ENCODE measurements at regions of chr12 and their contacts with region 1.

Region 1: GRCh38 chr12:751192-751998 is 984 bp upstream of the WNK1 start:
- DNase-seq: peak; percentile 99
- H3K4me3 ChIP-seq: peak overlapping the region; percentile 87
- H3K27ac ChIP-seq: peak overlapping the region; percentile 90
- H3K4me1 ChIP-seq: peaks cover 39% of the 10 kb centered on the region
- CTCF ChIP-seq: peak; percentile 88

Region 2: GRCh38 chr12:614411-614970 is 136.9 kb before region 1 on chr12:
- CTCF ChIA-PET with region 1: interaction called, 25 read pairs
- POLR2A ChIA-PET with region 1: interaction called, 18 read pairs
- intact Hi-C with region 1: loop called (anchors 1 kb)
- DNase-seq: peak; percentile 70
- H3K4me3 ChIP-seq: no peak overlapping the region
- H3K27ac ChIP-seq: no peak overlapping the region
- H3K4me1 ChIP-seq: peaks cover 15% of the 10 kb centered on the region
- CTCF ChIP-seq: peak; percentile 82

Region 3: GRCh38 chr12:674272-674781 is 77.1 kb before region 1 on chr12:
- CTCF ChIA-PET with region 1: interaction called, 4 read pairs
- POLR2A ChIA-PET with region 1: interaction called, 37 read pairs
- intact Hi-C with region 1: loop called (anchors 1 kb)
- DNase-seq: peak; percentile 71
- H3K4me3 ChIP-seq: peak overlapping the region; percentile 47
- H3K27ac ChIP-seq: peak overlapping the region; percentile 82
- H3K4me1 ChIP-seq: peaks cover 56% of the 10 kb centered on the region
- CTCF ChIP-seq: no peak

Region 4: DNA sequence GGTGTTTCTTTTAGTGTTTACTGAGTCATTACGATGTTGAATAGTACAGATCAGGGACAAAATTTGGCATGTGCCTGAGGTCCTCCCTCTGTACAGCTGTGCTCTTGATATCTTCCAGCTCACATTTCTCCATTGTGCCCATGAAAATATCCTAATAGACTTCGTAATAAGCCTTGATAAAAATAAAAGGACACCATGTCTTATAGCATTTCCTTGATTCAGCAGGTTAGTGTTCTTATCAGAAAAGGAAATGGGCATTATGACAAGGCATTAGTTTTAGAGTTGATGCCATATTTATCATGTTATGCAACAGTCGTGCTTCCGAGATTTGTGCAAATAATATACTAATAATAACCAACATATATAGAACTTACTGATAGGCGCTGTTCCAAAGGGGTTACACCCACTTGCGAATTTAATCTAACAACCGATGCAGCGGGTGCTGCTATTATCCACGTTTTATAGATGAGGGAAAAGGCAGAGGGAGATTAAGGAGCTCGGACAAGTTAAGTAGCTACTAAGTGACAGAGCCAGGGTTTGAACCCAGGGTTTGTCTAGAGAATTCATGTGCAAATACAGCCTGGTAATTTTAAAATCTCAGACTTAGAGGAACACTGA is 14.2 kb before region 1 on chr12:
- CTCF ChIA-PET with region 1: interaction called, 4 read pairs
- POLR2A ChIA-PET with region 1: interaction called, 34 read pairs
- intact Hi-C with region 1: no loop called
- DNase-seq: no peak
- H3K4me3 ChIP-seq: no peak overlapping the region
- H3K27ac ChIP-seq: no peak overlapping the region
- H3K4me1 ChIP-seq: no peaks in the 10 kb centered on the region
- CTCF ChIP-seq: no peak

Region 5: GRCh38 chr12:938810-939209 is 187.4 kb after region 1 on chr12:
- CTCF ChIA-PET with region 1: no interaction called
- POLR2A ChIA-PET with region 1: no interaction called
- intact Hi-C with region 1: no loop called
- DNase-seq: no peak
- H3K4me3 ChIP-seq: no peak overlapping the region
- H3K27ac ChIP-seq: no peak overlapping the region
- H3K4me1 ChIP-seq: no peaks in the 10 kb centered on the region
- CTCF ChIP-seq: no peak

Region 6: GRCh38 chr12:949453-950191 is 198.2 kb after region 1 on chr12 and contains the start of gene RAD52:
- CTCF ChIA-PET with region 1: no interaction called
- POLR2A ChIA-PET with region 1: interaction called, 3 read pairs
- intact Hi-C with region 1: loop called (anchors 1 kb)
- DNase-seq: peak; percentile 99
- H3K4me3 ChIP-seq: peak within 1 kb of the TSS; percentile 75
- H3K27ac ChIP-seq: peak within 1 kb of the TSS; percentile 84
- H3K4me1 ChIP-seq: peaks cover 21% of the 10 kb centered on the region
- CTCF ChIP-seq: peak; percentile 90
- total RNA-seq, gene RAD52: 30.8 and 31.8 TPM in 2 replicates